Posterior vena cava (tissue), 2 donors: ENCODE measurements at regions of chr19 and their contacts with region 1.

Region 1: GRCh38 chr19:30577551-30578105 is 205.4 kb downstream of the ZNF536 start:
- DNase-seq: peak; percentile 36

Region 2: DNA sequence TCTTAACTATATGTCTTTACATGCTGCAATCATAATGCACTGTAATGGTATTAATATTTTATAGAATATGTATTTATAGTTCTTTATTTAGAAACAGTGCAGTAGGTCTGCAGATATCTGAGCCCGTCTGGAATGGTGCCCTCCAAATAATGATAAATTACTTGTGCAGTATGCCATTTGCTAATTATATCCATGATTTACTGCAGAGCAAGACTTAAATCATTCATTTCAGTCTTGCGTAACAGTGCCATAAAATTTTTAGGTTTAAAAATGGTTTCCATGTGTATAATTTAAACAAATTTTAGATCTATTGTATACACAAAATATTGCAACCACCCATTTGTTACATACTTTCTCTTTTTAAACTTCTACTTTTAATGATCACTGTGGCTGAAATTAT is 30.4 kb before region 1 on chr19:
- intact Hi-C with region 1: loop called in 1 of 2 experiments (anchors 1 kb)
- DNase-seq: no peak

Region 3: GRCh38 chr19:30682999-30683536 is 105.4 kb after region 1 on chr19:
- intact Hi-C with region 1: no loop called
- DNase-seq: peak; percentile 93